ENCODE measurements at regions of chr7 and their contacts with region 1.

Region 1: DNA sequence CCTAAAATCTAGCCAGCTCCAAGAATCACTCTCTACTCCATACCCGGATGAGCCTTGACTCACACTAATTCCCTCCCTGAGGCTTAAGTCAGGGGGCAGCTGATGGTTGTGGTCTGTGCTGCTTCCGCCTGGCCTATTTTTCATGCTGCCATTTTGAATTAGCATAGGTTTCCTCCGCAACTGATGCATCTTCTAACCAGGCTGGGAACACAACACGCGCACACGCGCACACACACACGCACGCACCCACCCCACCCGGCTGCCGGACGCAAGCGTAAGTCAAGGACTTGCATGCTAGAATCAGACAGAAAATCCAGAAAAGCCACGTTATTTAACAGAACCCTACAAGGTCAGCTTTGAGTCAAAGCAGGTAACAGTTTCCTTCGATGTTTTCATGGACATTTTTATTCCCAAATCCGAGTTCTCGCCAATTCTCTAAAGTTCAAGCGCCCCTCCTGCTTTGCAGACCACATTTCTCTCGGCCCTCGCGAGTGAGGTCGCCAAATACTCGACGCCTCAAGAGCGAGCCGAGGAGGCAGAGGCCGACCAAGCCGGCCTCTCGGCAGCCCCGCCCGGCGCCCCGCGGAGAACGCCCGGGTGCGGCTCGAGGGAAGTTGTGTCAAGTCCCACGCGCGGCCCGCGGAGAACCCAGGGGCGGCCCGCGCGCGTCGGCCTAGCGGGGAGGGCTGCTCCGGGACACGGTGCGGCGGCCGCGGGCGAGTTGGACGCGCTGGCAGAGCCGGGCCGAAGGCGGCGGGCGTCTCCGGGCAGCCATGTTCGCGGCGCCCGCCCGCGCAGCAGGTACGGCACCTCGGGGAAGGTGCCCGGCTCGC is 961 bp downstream of the SCRN1 start:
- DNase-seq: peak; percentile 84
- H3K4me3 ChIP-seq: peak overlapping the region; percentile 100
- H3K27ac ChIP-seq: peak overlapping the region; percentile 77
- H3K4me1 ChIP-seq: peaks cover 34% of the 10 kb centered on the region
- CTCF ChIP-seq: no peak

Region 2: DNA sequence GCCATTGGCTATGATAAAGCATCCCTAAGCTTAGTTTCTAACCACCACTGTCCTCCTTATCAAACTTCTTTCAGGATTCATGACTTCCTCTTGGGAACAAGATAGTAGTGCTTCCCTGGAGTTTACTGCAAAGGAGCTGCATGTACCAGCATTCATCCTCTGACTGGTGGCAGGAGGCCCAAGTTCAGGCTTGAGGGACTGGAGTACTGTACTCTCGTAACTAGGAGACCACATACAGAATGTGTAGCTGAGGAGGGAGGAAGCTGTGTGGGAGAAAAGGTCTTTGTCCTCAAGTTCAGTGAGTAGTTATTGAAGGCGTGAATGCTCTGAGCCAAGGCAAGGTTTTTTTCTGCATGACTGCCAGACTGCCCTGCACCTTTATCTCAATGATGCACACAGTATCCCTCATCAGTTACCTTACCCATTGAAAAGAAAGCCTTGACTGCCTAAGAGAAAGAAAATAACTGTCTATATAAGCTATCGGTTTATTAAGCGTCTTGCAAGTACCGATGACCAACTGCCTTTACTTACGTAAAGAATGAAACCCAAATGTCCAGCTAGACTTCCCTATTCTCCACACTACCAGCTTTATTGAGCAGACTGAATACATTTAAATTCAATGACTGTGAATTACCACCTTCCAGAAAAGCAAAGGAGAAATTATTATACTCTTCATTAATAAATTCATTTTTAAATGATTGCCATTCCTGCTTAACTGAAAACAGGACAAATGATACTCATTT is 11.8 kb before region 1 on chr7:
- CTCF ChIA-PET with region 1: no interaction called
- POLR2A ChIA-PET with region 1: interaction called, 11 read pairs
- intact Hi-C with region 1: no loop called
- DNase-seq: no peak
- H3K4me3 ChIP-seq: no peak overlapping the region
- H3K27ac ChIP-seq: no peak overlapping the region
- H3K4me1 ChIP-seq: no peaks in the 10 kb centered on the region
- CTCF ChIP-seq: no peak

Region 3: GRCh38 chr7:30116771-30117170 is 128.1 kb after region 1 on chr7:
- CTCF ChIA-PET with region 1: no interaction called
- POLR2A ChIA-PET with region 1: no interaction called
- intact Hi-C with region 1: loop called (anchors 5 kb)
- DNase-seq: no peak
- H3K4me3 ChIP-seq: no peak overlapping the region
- H3K27ac ChIP-seq: no peak overlapping the region
- H3K4me1 ChIP-seq: peaks cover 45% of the 10 kb centered on the region
- CTCF ChIP-seq: no peak

Measured in OCI-LY7 (cell line).